ENCODE measurements at regions of chr3 and their contacts with region 1.

Region 1: GRCh38 chr3:16338999-16339398 is 74.0 kb downstream of the OXNAD1 start:
- DNase-seq: peak in 1 of 2 donors; percentile 89
- H3K4me3 ChIP-seq: no peak overlapping the region
- H3K27ac ChIP-seq: peak overlapping the region; percentile 34 to 58
- H3K4me1 ChIP-seq: peaks cover 0 to 9% of the 10 kb centered on the region in 2 donors
- H3K27me3 ChIP-seq: no peaks in the 10 kb centered on the region
- CTCF ChIP-seq: no peak

Region 2: GRCh38 chr3:16203031-16203430 is 136.0 kb before region 1 on chr3:
- intact Hi-C with region 1: no loop called
- DNase-seq: no peak
- H3K4me3 ChIP-seq: no peak overlapping the region
- H3K27ac ChIP-seq: no peak overlapping the region
- H3K4me1 ChIP-seq: no peaks in the 10 kb centered on the region
- H3K27me3 ChIP-seq: no peaks in the 10 kb centered on the region
- CTCF ChIP-seq: no peak

Region 3: DNA sequence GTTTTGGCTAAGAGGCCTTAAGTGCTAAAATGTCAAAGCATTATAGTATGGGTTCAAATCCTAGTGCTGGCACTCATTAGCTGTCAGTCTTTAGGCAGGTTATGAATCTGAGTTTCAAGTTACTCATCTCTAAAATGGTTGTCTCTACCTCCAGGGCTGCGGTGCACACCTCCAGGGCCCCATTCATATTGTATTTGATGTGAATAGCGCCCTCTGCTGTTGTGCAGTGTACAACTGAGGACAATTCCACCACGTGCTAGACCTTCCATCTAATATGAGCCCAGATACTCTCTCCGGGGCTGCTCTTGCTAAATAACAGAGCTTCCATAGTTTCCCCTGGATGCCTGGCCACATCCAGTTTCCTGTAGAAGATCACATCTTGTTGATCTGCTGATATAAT is 19.7 kb before region 1 on chr3:
- intact Hi-C with region 1: no loop called
- DNase-seq: no peak
- H3K4me3 ChIP-seq: no peak overlapping the region
- H3K27ac ChIP-seq: no peak overlapping the region
- H3K4me1 ChIP-seq: no peaks in the 10 kb centered on the region
- H3K27me3 ChIP-seq: no peaks in the 10 kb centered on the region
- CTCF ChIP-seq: no peak

Region 4: DNA sequence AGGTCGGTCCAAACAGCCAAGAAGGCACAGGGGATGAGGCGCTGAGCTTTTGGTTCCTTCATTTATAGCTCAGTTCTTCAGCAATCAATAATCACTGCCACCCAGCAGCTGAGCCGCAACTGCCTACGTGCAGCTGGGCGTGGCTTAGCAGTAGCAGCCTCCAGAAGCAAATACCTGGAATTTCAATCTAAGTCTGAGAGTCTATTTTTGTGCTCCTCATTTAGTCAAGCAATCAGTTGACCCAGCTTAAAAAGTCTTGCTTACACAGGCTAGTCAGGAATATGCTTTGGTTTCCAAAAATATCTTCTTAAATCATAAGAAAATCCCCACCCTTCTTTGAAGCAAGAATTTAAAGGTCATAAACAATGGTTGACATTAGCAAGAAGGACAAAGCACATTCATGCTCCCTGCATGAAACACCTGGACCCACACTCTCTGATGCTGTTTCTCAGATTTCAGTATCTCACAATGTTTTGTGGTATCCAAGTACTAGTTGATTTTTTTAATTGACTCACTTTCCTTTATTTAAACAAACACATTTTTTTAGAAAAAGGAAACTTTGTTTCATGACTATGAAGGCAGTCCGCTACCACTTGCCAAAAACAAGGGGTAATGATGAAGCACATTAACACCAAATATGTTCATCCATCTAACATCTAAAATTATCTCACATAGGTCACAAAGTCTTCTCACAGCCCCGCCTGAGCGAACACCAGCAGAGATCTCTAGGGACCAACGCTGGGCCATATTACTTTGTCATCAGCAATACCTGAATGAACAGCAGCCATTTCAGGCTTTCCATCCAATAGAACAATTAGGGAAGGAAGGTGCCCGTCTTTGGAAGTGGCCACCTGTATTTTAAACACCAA is 32.1 kb after region 1 on chr3:
- intact Hi-C with region 1: loop called (anchors 1 kb)
- DNase-seq: peak in 1 of 2 donors; percentile 76
- H3K4me3 ChIP-seq: peak overlapping the region in 1 of 2 donors; percentile 2
- H3K27ac ChIP-seq: peak overlapping the region; percentile 75 to 83
- H3K4me1 ChIP-seq: peaks cover 6 to 45% of the 10 kb centered on the region in 2 donors
- H3K27me3 ChIP-seq: no peaks in the 10 kb centered on the region
- CTCF ChIP-seq: no peak

Region 5: DNA sequence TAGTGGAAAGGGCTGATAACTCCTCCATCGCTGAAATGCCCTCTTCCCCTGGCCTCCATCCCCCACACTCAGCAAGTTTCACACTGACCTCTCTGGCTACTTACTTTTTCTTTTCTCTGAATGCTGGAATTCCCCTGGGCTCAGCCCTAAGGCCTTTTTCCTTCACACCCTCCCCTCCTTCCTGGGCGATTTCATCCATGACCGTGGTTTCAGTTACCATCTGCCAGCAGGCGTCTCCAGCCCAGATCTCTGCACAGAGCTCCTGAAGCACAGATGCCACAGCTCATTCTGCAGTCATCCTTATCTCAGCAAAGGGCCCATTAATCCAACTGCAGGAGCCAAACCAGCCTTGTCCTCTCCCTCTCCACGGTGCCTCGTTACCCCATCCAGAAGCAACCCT is 60.5 kb after region 1 on chr3:
- intact Hi-C with region 1: loop called (anchors 10 kb)
- DNase-seq: no peak
- H3K4me3 ChIP-seq: peak overlapping the region in 1 of 2 donors; percentile 8
- H3K27ac ChIP-seq: peak overlapping the region; percentile 41 to 57
- H3K4me1 ChIP-seq: peaks cover 0 to 12% of the 10 kb centered on the region in 2 donors
- H3K27me3 ChIP-seq: no peaks in the 10 kb centered on the region
- CTCF ChIP-seq: peak in 2 of 3 experiments; percentile 3 to 29

Region 6: DNA sequence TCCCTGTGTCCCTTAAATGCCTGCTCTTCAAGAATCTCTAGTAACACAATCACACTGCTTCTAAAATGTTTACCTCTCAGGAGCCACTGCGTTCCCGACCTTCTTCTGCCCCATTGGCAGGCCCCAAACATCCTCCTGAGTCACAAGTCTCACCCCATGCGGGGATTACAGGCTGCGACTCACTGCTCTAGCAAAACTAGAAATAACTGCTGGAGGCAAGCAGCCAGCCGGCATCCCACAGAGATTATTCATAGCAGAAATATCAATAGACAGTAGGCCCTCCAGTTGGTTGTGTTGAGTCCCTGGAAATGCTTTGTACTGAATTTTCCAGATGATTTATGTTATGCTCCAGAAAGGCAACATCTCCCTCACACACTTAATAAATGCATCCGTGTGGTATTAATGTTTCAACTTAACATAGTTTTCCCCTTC is 109.7 kb after region 1 on chr3:
- intact Hi-C with region 1: loop called (anchors 5 kb)
- DNase-seq: peak; percentile 43 to 95
- H3K4me3 ChIP-seq: peak overlapping the region in 1 of 2 donors; percentile 21
- H3K27ac ChIP-seq: peak overlapping the region; percentile 69 to 84
- H3K4me1 ChIP-seq: peaks cover 10 to 35% of the 10 kb centered on the region in 2 donors
- H3K27me3 ChIP-seq: no peaks in the 10 kb centered on the region
- CTCF ChIP-seq: no peak